ENCODE measurements at regions of chr3 and their contacts with region 1.

Region 1: GRCh38 chr3:188294823-188295487 is 141.0 kb downstream of the LPP start:
- DNase-seq: peak in 1 of 3 donors; percentile 38
- H3K4me3 ChIP-seq: no peak overlapping the region
- H3K4me3 Mint-ChIP-seq: no peak overlapping the region
- H3K27ac ChIP-seq: no peak overlapping the region
- H3K27ac Mint-ChIP-seq: peak overlapping the region; percentile 28 to 79 (median 61)
- H3K4me1 ChIP-seq: peaks cover 58 to 74% of the 10 kb centered on the region in 2 donors
- H3K4me1 Mint-ChIP-seq: peaks cover 72% of the 10 kb centered on the region
- H3K27me3 ChIP-seq: no peaks in the 10 kb centered on the region
- H3K27me3 Mint-ChIP-seq: peaks cover 0 to 2% (median 0%) of the 10 kb centered on the region in 3 donors
- CTCF ChIP-seq: no peak

Region 2: GRCh38 chr3:188170461-188171459 is 124.2 kb before region 1 on chr3:
- intact Hi-C with region 1: no loop called
- DNase-seq: no peak
- H3K4me3 ChIP-seq: no peak overlapping the region
- H3K4me3 Mint-ChIP-seq: no peak overlapping the region
- H3K27ac ChIP-seq: no peak overlapping the region
- H3K27ac Mint-ChIP-seq: no peak overlapping the region
- H3K4me1 ChIP-seq: peaks cover 7 to 12% of the 10 kb centered on the region in 2 donors
- H3K4me1 Mint-ChIP-seq: peaks cover 10% of the 10 kb centered on the region
- H3K27me3 ChIP-seq: no peaks in the 10 kb centered on the region
- H3K27me3 Mint-ChIP-seq: no peaks in the 10 kb centered on the region
- CTCF ChIP-seq: no peak

Region 3: DNA sequence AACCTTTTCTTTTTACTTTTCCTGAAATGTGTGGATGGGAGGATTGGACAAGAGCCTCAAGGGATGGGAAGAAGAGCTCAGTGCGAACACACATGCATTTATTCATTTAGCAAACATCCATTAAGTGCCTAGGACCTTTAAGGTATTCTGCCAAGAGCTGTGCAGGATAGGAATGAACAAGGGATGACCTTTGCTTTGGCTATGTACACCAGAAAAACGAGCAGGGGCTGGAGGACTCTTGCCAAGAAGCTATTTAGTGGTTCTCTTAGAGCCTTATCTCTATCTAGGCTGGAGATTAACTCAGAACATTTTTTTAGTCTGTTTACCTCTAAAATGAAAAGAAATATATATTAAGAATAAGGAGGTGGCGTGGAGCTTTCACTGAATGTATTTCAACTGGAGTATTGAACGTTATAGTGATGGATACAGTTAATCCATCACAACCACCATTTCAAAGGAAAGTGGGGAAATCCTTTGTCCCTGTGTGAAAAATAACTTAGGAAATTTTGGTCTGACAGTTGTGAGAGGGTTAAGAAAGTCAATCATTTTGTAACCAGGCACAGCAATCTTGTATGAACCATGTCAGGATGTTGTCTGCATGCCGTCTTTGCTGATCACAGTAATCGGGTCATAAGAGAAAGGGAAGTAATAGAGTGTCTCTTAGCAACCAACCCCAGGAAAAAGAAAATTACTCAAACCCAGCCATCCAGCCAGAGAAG is 138.0 kb after region 1 on chr3:
- intact Hi-C with region 1: loop called (anchors 5 to 10 kb)
- DNase-seq: peak; percentile 75 to 86 (median 80)
- H3K4me3 ChIP-seq: peak overlapping the region in 2 of 3 experiments; percentile 43 to 60
- H3K4me3 Mint-ChIP-seq: peak overlapping the region; percentile 60 to 80
- H3K27ac ChIP-seq: peak overlapping the region; percentile 86 to 94
- H3K27ac Mint-ChIP-seq: peak overlapping the region; percentile 98 to 100 (median 100)
- H3K4me1 ChIP-seq: peaks cover 53 to 79% of the 10 kb centered on the region in 2 donors
- H3K4me1 Mint-ChIP-seq: peaks cover 62% of the 10 kb centered on the region
- H3K27me3 ChIP-seq: no peaks in the 10 kb centered on the region
- H3K27me3 Mint-ChIP-seq: no peaks in the 10 kb centered on the region
- CTCF ChIP-seq: no peak

Region 4: DNA sequence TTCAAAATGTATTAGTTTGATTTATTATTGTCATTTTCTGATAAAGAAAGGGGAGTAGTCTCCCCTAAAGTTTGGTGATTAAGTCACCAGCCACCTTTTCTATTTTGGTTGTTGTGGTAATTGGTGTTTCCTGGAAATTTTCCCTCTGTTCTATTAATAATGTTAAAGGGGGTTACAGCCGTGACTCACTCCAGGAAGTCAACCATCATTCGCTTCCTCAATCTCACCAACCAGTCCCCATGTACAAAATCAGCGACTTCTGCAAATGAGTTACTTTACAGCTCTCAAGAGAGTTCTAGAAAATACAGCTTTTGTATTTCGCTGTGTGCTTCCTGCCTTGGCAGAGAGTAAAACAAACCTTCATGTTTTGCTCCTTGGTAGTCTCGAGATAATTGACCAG is 144.1 kb after region 1 on chr3:
- intact Hi-C with region 1: loop called (anchors 5 to 10 kb)
- DNase-seq: peak; percentile 78 to 97 (median 93)
- H3K4me3 ChIP-seq: peak overlapping the region in 1 of 3 experiments; percentile 50
- H3K4me3 Mint-ChIP-seq: peak overlapping the region in 1 of 2 donors; percentile 48
- H3K27ac ChIP-seq: peak overlapping the region; percentile 40 to 90
- H3K27ac Mint-ChIP-seq: peak overlapping the region; percentile 86 to 96 (median 93)
- H3K4me1 ChIP-seq: peaks cover 26 to 48% of the 10 kb centered on the region in 2 donors
- H3K4me1 Mint-ChIP-seq: peaks cover 42% of the 10 kb centered on the region
- H3K27me3 ChIP-seq: no peaks in the 10 kb centered on the region
- H3K27me3 Mint-ChIP-seq: no peaks in the 10 kb centered on the region
- CTCF ChIP-seq: no peak

Region 5: DNA sequence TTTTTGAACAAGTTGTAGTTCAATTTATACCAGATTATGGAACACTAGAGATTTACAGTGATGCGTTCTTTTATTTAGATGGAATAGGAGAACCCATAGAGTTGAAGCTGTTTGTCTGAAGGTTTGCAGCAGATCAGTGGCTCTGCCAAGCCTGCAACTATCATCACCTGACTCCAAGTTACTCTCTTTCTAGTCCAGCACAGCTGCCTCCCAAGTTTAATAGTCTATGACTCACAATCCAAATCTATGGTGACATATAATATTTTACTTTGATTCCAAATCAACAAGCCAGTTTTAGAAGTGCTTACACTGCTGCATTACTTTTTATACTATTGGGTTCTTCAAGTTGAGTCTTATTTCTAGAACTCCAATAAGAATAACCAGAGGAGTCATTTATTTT is 259.4 kb after region 1 on chr3:
- intact Hi-C with region 1: no loop called
- DNase-seq: no peak
- H3K4me3 ChIP-seq: no peak overlapping the region
- H3K4me3 Mint-ChIP-seq: no peak overlapping the region
- H3K27ac ChIP-seq: no peak overlapping the region
- H3K27ac Mint-ChIP-seq: no peak overlapping the region
- H3K4me1 ChIP-seq: peaks cover 13 to 17% of the 10 kb centered on the region in 2 donors
- H3K4me1 Mint-ChIP-seq: peaks cover 21% of the 10 kb centered on the region
- H3K27me3 ChIP-seq: no peaks in the 10 kb centered on the region
- H3K27me3 Mint-ChIP-seq: no peaks in the 10 kb centered on the region
- CTCF ChIP-seq: no peak

Region 6: DNA sequence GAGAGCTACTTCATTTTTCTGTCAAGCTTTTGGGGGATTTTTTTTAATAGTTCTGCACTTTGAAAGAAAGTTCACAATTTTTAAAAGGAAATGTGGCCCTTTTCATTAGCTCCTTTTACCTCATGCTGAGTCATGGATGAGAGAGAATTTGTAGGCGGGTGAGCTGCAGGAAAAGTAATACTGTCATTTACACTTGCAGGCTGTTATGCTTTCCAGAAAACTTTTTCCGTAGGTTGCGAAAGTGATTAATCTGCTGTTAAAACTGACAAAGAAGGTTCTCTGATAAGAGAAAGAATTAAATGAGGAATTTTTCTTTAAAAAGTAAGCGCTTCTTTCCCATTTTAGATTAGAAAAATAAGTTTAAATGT is 289.2 kb after region 1 on chr3:
- intact Hi-C with region 1: loop called in 1 of 2 experiments (anchors 10 kb)
- DNase-seq: peak in 2 of 3 donors; percentile 30 to 66
- H3K4me3 ChIP-seq: peak overlapping the region in 2 of 3 experiments; percentile 24 to 62
- H3K4me3 Mint-ChIP-seq: peak overlapping the region in 1 of 2 donors; percentile 55
- H3K27ac ChIP-seq: peak overlapping the region in 1 of 2 donors; percentile 61
- H3K27ac Mint-ChIP-seq: peak overlapping the region in 1 of 7 donors; percentile 89
- H3K4me1 ChIP-seq: peaks cover 65 to 73% of the 10 kb centered on the region in 2 donors
- H3K4me1 Mint-ChIP-seq: peaks cover 11% of the 10 kb centered on the region
- H3K27me3 ChIP-seq: no peaks in the 10 kb centered on the region
- H3K27me3 Mint-ChIP-seq: no peaks in the 10 kb centered on the region
- CTCF ChIP-seq: no peak